Mammary epithelial cell (primary cell): ENCODE measurements at regions of chr9 and their contacts with region 1.

Region 1: GRCh38 chr9:128863647-128864046 is 18.1 kb downstream of the KYAT1 start:
- DNase-seq: peak; percentile 48
- H3K4me3 ChIP-seq: no peak overlapping the region
- H3K27ac ChIP-seq: no peak overlapping the region
- H3K4me1 ChIP-seq: peaks cover 11% of the 10 kb centered on the region
- H3K27me3 ChIP-seq: no peaks in the 10 kb centered on the region
- CTCF ChIP-seq: peak; percentile 75 to 97

Region 2: GRCh38 chr9:128771745-128772519 is 91.7 kb before region 1 on chr9 and contains the start of gene ZER1:
- CTCF ChIA-PET with region 1: no interaction called
- dilution Hi-C with region 1: loop called (anchors 5 kb)
- in situ Hi-C with region 1: no loop called
- intact Hi-C with region 1: no loop called
- DNase-seq: peak; percentile 86
- H3K4me3 ChIP-seq: peak within 1 kb of the TSS; percentile 56 to 81 (median 67)
- H3K27ac ChIP-seq: peak within 1 kb of the TSS; percentile 79
- H3K4me1 ChIP-seq: peaks cover 5% of the 10 kb centered on the region
- H3K27me3 ChIP-seq: no peaks in the 10 kb centered on the region
- CTCF ChIP-seq: no peak
- total RNA-seq, gene ZER1: 27.3 to 29.2 TPM

Region 3: DNA sequence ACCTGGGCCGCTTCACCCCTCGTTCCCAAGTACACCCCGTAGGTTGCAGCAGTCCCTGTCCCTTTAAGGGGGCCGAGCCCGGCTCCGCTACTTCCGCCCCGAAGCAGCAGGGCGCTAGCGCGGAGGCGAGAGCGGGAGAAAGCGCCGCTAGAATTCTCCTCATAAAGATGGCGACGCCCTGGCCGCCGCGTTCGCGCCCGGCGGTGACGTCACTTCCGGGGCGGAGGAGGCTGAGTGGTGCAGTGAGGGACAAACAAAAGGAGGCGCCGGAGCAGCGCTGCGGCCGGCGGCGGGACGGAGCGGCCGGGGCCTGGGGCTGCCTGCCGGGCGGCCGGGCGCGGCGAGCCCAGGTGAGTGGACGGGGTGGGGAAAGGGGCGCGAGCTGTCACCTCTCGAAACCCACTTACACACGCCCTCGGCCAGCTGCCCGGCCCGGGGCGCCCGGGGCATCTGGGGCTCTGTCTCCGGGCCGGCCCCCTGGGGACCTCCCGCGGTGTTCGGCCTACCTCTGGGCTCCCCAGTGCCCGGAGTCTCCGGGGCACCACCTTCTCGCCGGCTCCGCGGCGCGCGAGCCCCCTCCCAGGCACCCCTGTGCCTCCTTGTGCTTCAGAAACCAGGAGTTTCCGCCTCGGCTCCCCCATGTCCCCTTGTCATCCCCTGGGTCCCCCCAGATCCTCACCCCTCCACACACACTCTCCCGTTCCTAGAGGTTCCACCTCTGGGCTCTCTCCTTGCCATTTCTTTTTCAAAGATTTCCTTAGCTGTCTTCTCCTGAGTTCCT is 18.4 kb after region 1 on chr9 and contains the starts of genes KYAT1 and LRRC8A:
- CTCF ChIA-PET with region 1: no interaction called
- dilution Hi-C with region 1: no loop called
- in situ Hi-C with region 1: no loop called
- intact Hi-C with region 1: loop called (anchors 1 kb)
- DNase-seq: peak; percentile 96
- H3K4me3 ChIP-seq: peak within 1 kb of the TSS; percentile 85 to 88 (median 87)
- H3K27ac ChIP-seq: peak within 1 kb of the TSS; percentile 76
- H3K4me1 ChIP-seq: peaks cover 49% of the 10 kb centered on the region
- H3K27me3 ChIP-seq: no peaks in the 10 kb centered on the region
- CTCF ChIP-seq: no peak
- total RNA-seq, gene KYAT1: 10.2 to 11.5 TPM
- total RNA-seq, gene LRRC8A: 155 to 206 TPM

Region 4: GRCh38 chr9:128927731-128928411 is 64.2 kb after region 1 on chr9:
- CTCF ChIA-PET with region 1: no interaction called
- dilution Hi-C with region 1: no loop called
- in situ Hi-C with region 1: loop called (anchors 5 kb)
- intact Hi-C with region 1: loop called (anchors 1 kb)
- DNase-seq: no peak
- H3K4me3 ChIP-seq: no peak overlapping the region
- H3K27ac ChIP-seq: no peak overlapping the region
- H3K4me1 ChIP-seq: peaks cover 3% of the 10 kb centered on the region
- H3K27me3 ChIP-seq: no peaks in the 10 kb centered on the region
- CTCF ChIP-seq: peak; percentile 84 to 88

Region 5: GRCh38 chr9:129036241-129036922 is 172.7 kb after region 1 on chr9 and contains the start of gene MIGA2:
- CTCF ChIA-PET with region 1: no interaction called
- dilution Hi-C with region 1: loop called (anchors 10 kb)
- in situ Hi-C with region 1: no loop called
- intact Hi-C with region 1: no loop called
- DNase-seq: peak; percentile 99
- H3K4me3 ChIP-seq: peak within 1 kb of the TSS; percentile 84 to 100 (median 89)
- H3K27ac ChIP-seq: peak within 1 kb of the TSS; percentile 42
- H3K4me1 ChIP-seq: peaks cover 17% of the 10 kb centered on the region
- H3K27me3 ChIP-seq: no peaks in the 10 kb centered on the region
- CTCF ChIP-seq: no peak
- total RNA-seq, gene MIGA2: 16.3 to 24.7 TPM